ENCODE measurements at regions of chr6 and their contacts with region 1.

Region 1: GRCh38 chr6:157710604-157711003 is 112.4 kb upstream of the SNX9 start:
- DNase-seq: no peak
- H3K4me3 ChIP-seq: no peak overlapping the region
- H3K27me3 ChIP-seq: no peaks in the 10 kb centered on the region
- CTCF ChIP-seq: no peak

Region 2: DNA sequence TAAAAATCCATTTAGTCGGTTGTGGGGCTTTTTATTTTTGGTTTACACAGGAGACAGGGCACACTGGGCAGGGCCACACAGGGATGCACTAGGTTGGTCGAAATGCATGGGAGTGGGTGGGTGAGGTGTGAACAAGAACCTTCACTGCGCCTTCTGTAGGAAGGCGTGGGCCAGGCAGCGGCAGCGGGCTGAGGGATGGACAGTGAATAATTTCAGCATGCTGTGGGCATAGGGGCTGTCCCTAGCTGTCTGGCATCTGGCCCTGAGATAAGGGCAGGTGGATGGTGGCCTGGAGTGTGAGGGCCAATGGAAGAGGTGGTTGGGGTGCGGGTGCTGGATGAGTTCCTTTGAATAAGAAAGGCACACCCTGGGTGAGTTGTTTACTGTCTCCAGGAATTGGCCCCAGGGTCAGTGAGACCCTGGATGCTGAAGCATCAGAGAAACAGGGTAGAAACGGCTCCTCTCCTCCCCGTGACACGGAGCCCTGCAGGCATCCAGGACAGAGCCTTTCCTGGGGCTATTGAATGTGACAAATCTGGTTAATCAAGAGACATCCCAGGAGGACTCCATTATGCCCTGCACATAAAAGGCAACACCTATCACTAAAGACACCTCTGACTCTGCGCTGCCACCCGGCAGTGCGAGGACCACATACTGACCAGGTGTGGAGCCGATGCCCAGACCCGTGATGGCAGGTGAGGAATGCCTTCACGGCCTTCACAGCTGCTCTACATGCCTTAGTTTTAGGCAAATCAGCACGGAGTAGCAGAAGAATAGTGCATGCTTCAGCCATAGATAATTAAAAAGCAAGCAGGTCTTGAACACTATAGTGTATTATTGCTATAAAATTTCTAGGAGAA is 10.6 kb before region 1 on chr6:
- CTCF ChIA-PET with region 1: no interaction called
- POLR2A ChIA-PET with region 1: no interaction called
- DNase-seq: no peak
- H3K4me3 ChIP-seq: no peak overlapping the region
- H3K27me3 ChIP-seq: peaks cover 5% of the 10 kb centered on the region
- CTCF ChIP-seq: no peak

Region 3: GRCh38 chr6:157741948-157742556 is 31.4 kb after region 1 on chr6:
- CTCF ChIA-PET with region 1: no interaction called
- POLR2A ChIA-PET with region 1: no interaction called
- DNase-seq: no peak
- H3K4me3 ChIP-seq: no peak overlapping the region
- H3K27me3 ChIP-seq: peaks cover 4% of the 10 kb centered on the region; the same call in 1 of the 2 replicates
- CTCF ChIP-seq: no peak

Region 4: DNA sequence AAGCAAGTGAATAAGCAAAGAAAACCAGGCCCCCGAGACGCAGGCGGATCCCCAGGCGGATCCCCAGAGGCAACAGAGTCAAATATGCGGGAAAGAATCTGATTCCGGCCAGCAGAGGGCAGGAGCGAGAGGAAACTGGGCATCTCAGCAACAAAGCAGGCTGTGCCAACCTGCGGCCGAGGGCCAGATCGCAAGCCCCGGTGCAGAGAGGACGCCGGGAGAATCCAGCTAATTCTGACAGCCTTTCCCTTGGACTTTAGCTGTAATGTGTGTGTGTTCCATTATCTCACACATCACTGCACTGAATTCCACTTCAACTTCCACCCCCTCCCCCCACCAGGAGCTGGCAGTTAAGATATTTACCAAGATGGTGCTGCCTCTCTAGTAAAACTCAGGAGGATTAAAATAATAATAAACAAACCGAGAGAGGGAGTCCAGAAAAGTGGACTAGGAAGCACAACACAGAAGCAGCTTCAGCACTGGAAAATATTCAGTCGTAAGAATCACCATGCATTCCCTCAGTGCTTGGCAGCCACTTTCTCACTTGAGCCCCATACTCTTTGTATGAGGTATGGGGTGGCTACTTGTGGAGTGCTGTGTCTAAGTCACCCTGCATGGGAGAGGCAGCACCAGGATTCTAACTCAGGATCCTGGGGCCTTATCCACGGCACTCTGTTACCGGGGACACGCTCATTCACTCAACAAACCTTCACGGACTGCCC is 46.3 kb after region 1 on chr6:
- CTCF ChIA-PET with region 1: interaction called, 10 read pairs
- POLR2A ChIA-PET with region 1: no interaction called
- DNase-seq: peak; percentile 17
- H3K4me3 ChIP-seq: no peak overlapping the region
- H3K27me3 ChIP-seq: no peaks in the 10 kb centered on the region
- CTCF ChIP-seq: peak; percentile 80

Region 5: DNA sequence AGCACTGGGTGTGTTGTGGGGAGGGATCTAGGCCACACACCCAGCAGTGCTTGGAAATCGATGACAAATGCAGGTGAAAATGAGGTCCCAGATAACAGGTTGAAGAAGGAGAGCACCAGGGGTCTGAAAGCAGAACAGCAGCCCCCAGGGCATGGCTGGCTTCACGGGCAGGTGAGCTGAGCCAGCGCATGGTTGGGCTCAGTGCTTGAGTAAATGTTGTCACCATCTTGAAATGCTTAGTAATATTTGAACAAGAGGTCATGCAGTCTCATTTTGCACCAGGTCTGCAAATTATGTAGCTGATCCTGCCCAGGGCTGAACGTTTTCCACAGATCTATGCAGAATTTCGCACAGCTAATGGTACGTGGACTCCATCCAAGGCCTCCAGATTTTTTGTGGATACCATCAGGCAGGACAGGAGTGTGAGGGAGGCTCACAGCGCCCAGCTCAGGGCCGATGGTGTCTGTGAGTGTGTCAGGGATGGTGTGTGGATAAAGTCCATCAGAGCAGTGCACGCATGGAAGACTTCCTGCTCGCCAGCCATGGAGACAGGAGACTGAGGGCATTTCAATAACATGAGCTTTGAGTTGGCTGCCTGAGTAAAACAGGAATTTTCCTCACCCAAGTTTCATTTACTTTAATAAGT is 59.3 kb after region 1 on chr6:
- CTCF ChIA-PET with region 1: no interaction called
- POLR2A ChIA-PET with region 1: interaction called, 10 read pairs
- DNase-seq: peak; percentile 16
- H3K4me3 ChIP-seq: no peak overlapping the region
- H3K27me3 ChIP-seq: no peaks in the 10 kb centered on the region
- CTCF ChIP-seq: no peak